ENCODE measurements at regions of chr14 and their contacts with region 1.

Region 1: DNA sequence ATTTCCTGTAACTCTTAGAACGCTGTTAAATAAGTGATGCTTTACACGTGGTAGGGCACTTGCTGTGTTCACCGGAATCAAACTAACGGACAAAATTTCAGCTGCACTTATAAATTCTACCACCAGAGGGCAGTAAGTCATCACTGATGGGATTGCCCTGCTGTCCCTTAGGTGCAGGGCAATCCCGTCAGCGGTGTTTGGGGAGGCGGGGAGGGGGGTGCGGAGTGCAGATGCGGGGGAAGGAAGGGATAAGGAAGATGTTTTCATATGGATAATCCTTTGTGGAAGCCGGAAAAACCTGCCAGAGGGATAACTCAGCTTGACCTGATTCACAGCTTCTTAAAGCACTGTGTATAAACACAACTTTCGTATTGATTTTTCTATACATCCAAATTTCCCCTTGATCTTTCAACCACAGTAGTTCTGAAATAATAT is 21.7 kb upstream of the SLC10A1 start:
- DNase-seq: peak; percentile 53
- H3K4me3 Mint-ChIP-seq: no peak overlapping the region
- H3K27ac Mint-ChIP-seq: no peak overlapping the region
- H3K4me1 Mint-ChIP-seq: peaks cover 5% of the 10 kb centered on the region
- H3K27me3 Mint-ChIP-seq: peaks cover 8% of the 10 kb centered on the region

Region 2: DNA sequence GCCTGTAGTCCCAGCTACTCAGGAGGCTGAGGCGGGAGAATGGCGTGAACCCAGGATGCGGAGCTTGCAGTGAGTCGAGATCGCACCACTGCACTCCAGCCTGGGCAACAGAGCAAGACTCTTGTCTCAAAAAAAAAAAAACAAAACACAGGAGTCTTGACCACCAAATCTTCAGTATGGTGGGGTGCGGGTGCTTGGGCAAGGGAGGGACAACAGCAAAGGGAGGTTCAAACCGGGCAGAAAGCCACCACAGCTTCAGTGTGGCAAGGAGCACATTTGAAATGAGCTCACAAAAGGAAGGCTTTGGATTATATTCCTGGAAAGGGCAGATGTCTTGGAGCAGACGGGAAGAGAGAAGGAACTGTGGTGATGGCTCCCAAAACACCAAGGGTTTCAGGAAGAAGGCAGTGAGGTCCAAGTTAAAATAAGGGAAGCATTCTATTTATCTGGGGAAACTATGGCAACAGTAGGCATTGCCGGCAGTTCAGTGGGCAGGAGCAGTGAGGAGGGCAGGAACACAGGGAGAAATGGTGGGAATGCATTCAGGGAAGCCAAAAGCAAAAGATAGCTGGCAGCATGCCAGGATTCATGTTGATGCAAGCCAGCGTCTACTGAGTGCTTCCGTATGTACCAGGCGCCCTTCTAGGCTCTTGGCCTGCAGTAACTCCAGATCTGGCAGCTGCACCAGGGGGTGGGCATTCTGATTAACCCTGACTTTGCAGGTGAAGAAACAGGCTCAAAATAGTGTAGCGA is 102.9 kb before region 1 on chr14:
- intact Hi-C with region 1: no loop called
- DNase-seq: no peak
- H3K4me3 Mint-ChIP-seq: peak overlapping the region; percentile 46
- H3K27ac Mint-ChIP-seq: peak overlapping the region; percentile 92
- H3K4me1 Mint-ChIP-seq: peaks cover 94% of the 10 kb centered on the region
- H3K27me3 Mint-ChIP-seq: no peaks in the 10 kb centered on the region

Region 3: DNA sequence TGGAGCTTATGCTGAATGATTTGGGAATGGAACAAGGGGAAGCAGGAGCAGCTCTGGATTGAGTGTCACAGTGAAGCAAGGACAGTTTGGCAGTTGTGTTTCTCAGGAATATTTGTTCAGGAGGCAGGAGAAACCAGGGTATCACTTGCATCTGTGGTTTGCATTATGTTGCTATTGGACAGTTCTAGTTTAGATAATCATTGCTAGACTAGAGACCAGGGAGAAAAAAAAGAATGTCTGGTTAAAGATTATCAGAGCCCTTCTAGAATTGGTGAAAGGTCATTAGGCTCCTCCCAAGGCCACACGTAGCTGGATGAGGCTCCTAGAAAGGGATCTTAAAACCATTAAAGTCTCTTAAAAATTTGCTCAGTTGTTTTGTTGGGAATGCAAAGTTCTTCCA is 68.8 kb before region 1 on chr14:
- intact Hi-C with region 1: no loop called
- DNase-seq: no peak
- H3K4me3 Mint-ChIP-seq: no peak overlapping the region
- H3K27ac Mint-ChIP-seq: no peak overlapping the region
- H3K4me1 Mint-ChIP-seq: peaks cover 6% of the 10 kb centered on the region
- H3K27me3 Mint-ChIP-seq: peaks cover 2% of the 10 kb centered on the region

Region 4: GRCh38 chr14:70585219-70585618 is 766.4 kb after region 1 on chr14:
- intact Hi-C with region 1: loop called (anchors 10 kb)
- DNase-seq: no peak
- H3K4me3 Mint-ChIP-seq: no peak overlapping the region
- H3K27ac Mint-ChIP-seq: no peak overlapping the region
- H3K4me1 Mint-ChIP-seq: peaks cover 7% of the 10 kb centered on the region
- H3K27me3 Mint-ChIP-seq: no peaks in the 10 kb centered on the region

Measured in activated T-helper 1 cell treated with anti-CD3 and anti-CD28 coated beads, Interleukin-12 subunit alpha, Interleukin-12 subunit beta, Interleukin-2, Interleukin-4 antibody, amounts not matched to agents 30 ng/mL and 10 ng/mL and 1 ng/mL, durations not matched to agents 14 hours and 24 hours and 36 hours (primary cell).